Pancreas (tissue), 10 donors: ENCODE measurements at regions of chr22 and their contacts with region 1.

Region 1: DNA sequence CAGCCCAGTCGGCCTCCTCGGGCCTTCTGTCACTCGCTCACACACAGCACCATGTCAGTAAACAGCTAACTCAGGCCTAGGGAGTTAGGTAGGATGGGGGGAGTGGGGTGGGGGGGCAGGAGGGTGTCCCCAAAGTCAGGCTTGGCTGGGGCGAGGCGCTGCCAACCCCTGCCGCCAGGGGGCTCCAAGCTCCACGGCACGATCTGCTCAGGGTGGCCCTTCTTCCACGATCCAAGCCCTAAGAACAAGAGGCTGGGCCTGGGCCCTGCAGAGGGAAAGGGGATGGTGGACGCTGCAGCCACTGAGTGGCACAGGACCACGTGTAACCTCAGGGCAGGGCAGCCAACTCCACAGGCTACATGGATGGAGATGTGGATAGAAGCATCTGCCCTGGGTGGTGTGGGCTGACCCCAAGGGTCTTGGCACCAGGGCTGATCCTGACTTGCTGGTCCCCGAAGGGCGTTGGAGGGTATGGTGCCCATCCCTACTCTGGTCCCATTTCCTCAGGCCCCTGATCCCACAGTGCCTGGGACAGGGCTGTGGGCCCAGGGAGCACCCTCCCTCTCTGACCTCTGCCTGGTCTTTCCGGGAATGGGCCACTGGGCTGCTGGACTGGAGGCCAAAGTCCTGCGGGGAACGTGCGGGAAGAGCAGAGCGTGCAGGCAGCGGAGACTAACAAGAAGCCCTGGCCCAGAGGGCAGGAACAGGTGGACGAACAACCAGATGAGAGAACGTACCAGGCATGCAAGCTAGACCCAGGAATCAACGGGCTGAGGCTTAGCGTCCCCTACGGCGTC is 29.1 kb upstream of the TXNRD2 start:
- DNase-seq: peak in 5 of 6 donors; percentile 38 to 90 (median 76)
- ATAC-seq: peak; percentile 65 to 79 (median 76)
- H3K4me3 ChIP-seq: no peak overlapping the region
- H3K27ac ChIP-seq: no peak overlapping the region
- H3K4me1 ChIP-seq: no peaks in the 10 kb centered on the region
- H3K27me3 ChIP-seq: no peaks in the 10 kb centered on the region
- CTCF ChIP-seq: peak; percentile 83 to 91 (median 84)

Region 2: GRCh38 chr22:19909350-19910179 is 61.1 kb before region 1 on chr22:
- intact Hi-C with region 1: no loop called
- DNase-seq: peak; percentile 50 to 89 (median 80)
- ATAC-seq: peak; percentile 81 to 98 (median 94)
- H3K4me3 ChIP-seq: no peak overlapping the region
- H3K27ac ChIP-seq: no peak overlapping the region
- H3K4me1 ChIP-seq: no peaks in the 10 kb centered on the region
- H3K27me3 ChIP-seq: no peaks in the 10 kb centered on the region
- CTCF ChIP-seq: peak; percentile 63 to 73 (median 72)

Region 3: DNA sequence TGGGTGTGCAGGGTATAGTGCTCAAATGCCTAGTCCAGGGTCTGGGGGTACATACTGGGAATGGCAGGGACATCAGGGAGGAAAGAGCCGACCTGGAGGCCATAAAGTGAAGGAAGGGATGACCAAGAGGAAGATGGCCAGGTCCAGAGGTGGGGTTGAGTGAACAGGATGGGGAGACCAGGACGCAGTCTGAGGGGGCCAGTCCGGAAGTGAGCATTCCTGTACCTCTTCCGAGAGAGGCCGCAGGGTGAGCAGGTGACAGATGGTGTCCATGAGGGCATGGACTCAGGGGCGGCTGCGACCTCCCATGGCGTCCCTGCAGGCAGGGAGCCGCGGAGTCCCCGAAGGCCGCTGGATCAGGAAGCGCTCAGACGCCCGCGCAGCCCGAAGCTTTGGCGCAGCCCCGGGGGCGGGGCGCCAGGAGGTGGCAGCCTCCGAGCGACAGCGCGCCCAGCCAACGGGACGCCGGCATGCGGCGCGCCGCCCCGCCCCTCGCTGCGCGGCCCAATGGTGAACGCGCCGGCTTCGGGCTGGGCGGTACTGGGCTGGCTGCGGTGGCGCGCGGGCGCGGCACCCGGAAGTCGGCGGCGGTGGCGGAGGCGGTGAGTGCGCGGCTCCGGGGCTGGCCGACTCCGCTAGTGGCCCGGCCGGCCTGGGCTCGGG is 50.0 kb after region 1 on chr22 and contains the start of gene TANGO2:
- intact Hi-C with region 1: loop called in 1 of 3 experiments (anchors 10 kb)
- DNase-seq: peak; percentile 86 to 99 (median 96)
- ATAC-seq: peak; percentile 84 to 90 (median 90)
- H3K4me3 ChIP-seq: peak within 1 kb of the TSS; percentile 59 to 97 (median 94)
- H3K27ac ChIP-seq: peak within 1 kb of the TSS; percentile 53 to 74 (median 70)
- H3K4me1 ChIP-seq: peaks cover 9 to 19% (median 13%) of the 10 kb centered on the region in 3 donors
- H3K27me3 ChIP-seq: no peaks in the 10 kb centered on the region
- CTCF ChIP-seq: no peak
- total RNA-seq, gene TANGO2: 4.0 to 18.3 (median 9.6) TPM

Region 4: GRCh38 chr22:20128902-20129746 is 158.4 kb after region 1 on chr22:
- intact Hi-C with region 1: loop called in 2 of 3 experiments (anchors 10 kb)
- DNase-seq: no peak
- ATAC-seq: peak in 2 of 4 donors; percentile 28 to 29
- H3K4me3 ChIP-seq: no peak overlapping the region
- H3K27ac ChIP-seq: no peak overlapping the region
- H3K4me1 ChIP-seq: peaks cover 0 to 6% (median 6%) of the 10 kb centered on the region in 3 donors
- H3K27me3 ChIP-seq: no peaks in the 10 kb centered on the region
- CTCF ChIP-seq: no peak

Region 5: GRCh38 chr22:20279662-20280134 is 309.0 kb after region 1 on chr22:
- intact Hi-C with region 1: loop called in 1 of 3 experiments (anchors 10 kb)
- DNase-seq: no peak
- ATAC-seq: no peak
- H3K4me3 ChIP-seq: no peak overlapping the region
- H3K27ac ChIP-seq: no peak overlapping the region
- H3K4me1 ChIP-seq: no peaks in the 10 kb centered on the region
- H3K27me3 ChIP-seq: no peaks in the 10 kb centered on the region
- CTCF ChIP-seq: no peak